A549 (cell line): ENCODE measurements at regions of chrX and their contacts with region 1.

Region 1: GRCh38 chrX:152632445-152633097 is 5.1 kb upstream of the GABRQ start:
- DNase-seq: peak; percentile 14 to 26
- ATAC-seq: peak in 1 of 2 experiments; percentile 66; a peak in 3 of 6 replicates
- H3K4me3 ChIP-seq: no peak overlapping the region
- H3K27ac ChIP-seq: no peak overlapping the region
- H3K4me1 ChIP-seq: no peaks in the 10 kb centered on the region; the same call in 2 of the 3 replicates
- CTCF ChIP-seq: peak; percentile 58
- EP300 ChIP-seq: no peak
- POLR2A ChIP-seq: no peak
- RAD21 ChIP-seq: peak; percentile 69 to 71

Region 2: DNA sequence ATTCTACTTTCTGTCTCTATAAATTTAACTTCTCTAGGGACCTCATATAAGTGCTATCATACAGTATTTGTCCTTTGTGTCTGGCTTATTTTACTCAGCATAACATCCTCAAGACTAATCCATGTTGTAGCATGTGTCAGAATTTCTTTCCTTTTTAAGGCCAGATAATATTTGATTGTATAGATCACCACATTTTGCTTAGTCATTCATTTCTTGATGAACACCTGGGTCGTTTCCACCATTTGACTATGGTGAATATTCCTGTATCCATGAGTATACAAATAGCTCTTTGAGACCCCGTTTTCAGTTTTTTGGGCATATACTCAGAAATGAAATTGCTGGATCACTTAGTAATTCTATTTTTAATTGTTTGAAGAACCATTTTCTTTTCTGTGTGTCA is 886.1 kb before region 1 on chrX:
- CTCF ChIA-PET with region 1: interaction called, 119 read pairs
- POLR2A ChIA-PET with region 1: no interaction called
- DNase-seq: no peak
- ATAC-seq: no peak
- H3K4me3 ChIP-seq: no peak overlapping the region
- H3K27ac ChIP-seq: no peak overlapping the region
- H3K4me1 ChIP-seq: no peaks in the 10 kb centered on the region
- CTCF ChIP-seq: no peak
- EP300 ChIP-seq: no peak
- POLR2A ChIP-seq: no peak
- RAD21 ChIP-seq: no peak

Region 3: DNA sequence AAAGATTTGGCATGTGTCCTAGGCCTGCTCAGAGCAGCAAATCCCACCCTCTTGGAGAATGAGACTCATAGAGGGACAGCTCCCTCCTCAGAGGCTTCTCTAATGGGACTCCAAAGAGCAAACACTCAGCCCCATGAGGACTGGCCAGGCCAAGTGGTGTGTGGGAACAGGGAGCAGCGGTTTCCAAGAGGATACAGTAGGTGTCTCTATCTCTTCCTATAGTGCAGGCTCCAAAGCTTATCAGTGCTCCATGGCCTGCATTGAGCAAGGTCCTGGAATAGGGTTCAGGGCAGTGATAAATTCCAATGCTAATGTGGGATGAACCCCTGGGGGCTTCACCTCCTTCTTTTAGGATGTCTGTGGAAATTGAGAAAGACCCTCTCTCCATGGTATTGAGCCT is 478.5 kb before region 1 on chrX:
- CTCF ChIA-PET with region 1: no interaction called
- POLR2A ChIA-PET with region 1: no interaction called
- DNase-seq: no peak
- ATAC-seq: no peak
- H3K4me3 ChIP-seq: no peak overlapping the region
- H3K27ac ChIP-seq: no peak overlapping the region
- H3K4me1 ChIP-seq: no peaks in the 10 kb centered on the region
- CTCF ChIP-seq: no peak
- EP300 ChIP-seq: no peak
- POLR2A ChIP-seq: no peak
- RAD21 ChIP-seq: no peak